Activated naive CD4-positive, alpha-beta T cell treated with anti-CD3 and anti-CD28 coated beads for 36 hours (primary cell): ENCODE measurements at regions of chr9 and their contacts with region 1.

Region 1: DNA sequence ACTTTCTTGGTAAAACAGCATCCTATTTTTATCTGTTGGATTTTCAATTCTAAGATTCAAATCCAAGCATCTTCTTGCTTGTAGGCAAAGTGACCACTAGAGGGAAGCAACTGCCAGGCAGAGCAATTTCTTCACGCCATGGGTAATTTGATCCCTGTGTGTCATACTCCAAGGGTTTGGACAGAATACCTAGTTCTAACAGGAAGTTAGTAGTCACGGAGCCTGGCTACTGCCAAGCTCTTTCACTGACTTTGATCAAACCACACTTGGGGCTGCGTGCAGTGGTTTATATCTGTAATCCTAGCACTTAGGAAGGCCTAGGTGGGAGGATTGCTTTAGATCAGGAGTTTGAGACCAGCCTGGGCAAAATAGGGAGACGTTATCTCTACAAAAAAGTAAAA is 473.6 kb upstream of the TNC start:
- DNase-seq: peak; percentile 16
- H3K4me3 Mint-ChIP-seq: no peak overlapping the region
- H3K27ac Mint-ChIP-seq: no peak overlapping the region
- H3K4me1 Mint-ChIP-seq: no peaks in the 10 kb centered on the region
- H3K27me3 Mint-ChIP-seq: peaks cover 10% of the 10 kb centered on the region

Region 2: DNA sequence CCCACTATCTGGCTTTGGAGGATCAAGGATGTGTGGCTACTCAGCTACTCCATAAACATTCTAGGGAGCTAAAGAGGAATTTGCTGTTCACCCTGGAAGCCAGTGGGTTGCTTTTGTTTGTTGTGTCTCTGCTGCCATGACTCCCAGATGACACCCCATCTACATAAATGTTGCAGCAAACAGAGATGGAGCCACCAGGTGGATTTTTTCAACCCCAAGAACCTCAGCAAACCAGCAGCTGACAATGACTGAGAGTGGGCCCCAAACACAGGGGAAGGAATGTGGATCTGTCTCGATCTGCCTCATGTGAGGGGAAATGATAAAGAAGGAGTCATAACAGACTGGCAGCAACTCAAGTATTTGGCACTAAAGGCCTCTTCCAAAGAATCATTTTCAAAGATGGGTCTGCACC is 341.0 kb before region 1 on chr9:
- CTCF ChIA-PET with region 1: no interaction called
- intact Hi-C with region 1: no loop called
- DNase-seq: no peak
- H3K4me3 Mint-ChIP-seq: no peak overlapping the region
- H3K27ac Mint-ChIP-seq: no peak overlapping the region
- H3K4me1 Mint-ChIP-seq: no peaks in the 10 kb centered on the region
- H3K27me3 Mint-ChIP-seq: peaks cover 3% of the 10 kb centered on the region

Region 3: DNA sequence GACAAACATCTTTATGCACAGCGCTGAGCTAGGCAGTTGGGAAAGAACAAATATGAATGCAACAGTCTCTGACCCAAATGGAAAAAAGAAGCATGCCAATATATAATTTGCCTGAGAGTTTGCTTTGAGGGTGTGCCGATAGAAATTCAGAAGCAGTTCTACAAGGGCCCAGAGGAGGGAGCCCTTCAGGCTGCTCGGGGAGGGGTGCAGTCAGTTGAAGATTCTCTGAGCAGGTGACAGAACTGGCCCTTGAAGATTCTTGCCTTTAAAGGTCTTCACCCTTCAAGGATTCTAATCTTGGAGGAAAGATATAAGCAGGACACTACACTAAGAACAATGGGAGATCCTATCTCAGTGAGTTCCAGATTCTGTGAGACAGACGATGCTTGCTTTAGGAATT is 558.3 kb after region 1 on chr9:
- CTCF ChIA-PET with region 1: no interaction called
- intact Hi-C with region 1: loop called (anchors 2 kb)
- DNase-seq: no peak
- H3K4me3 Mint-ChIP-seq: no peak overlapping the region
- H3K27ac Mint-ChIP-seq: no peak overlapping the region
- H3K4me1 Mint-ChIP-seq: peaks cover 5% of the 10 kb centered on the region
- H3K27me3 Mint-ChIP-seq: peaks cover 50% of the 10 kb centered on the region

Region 4: DNA sequence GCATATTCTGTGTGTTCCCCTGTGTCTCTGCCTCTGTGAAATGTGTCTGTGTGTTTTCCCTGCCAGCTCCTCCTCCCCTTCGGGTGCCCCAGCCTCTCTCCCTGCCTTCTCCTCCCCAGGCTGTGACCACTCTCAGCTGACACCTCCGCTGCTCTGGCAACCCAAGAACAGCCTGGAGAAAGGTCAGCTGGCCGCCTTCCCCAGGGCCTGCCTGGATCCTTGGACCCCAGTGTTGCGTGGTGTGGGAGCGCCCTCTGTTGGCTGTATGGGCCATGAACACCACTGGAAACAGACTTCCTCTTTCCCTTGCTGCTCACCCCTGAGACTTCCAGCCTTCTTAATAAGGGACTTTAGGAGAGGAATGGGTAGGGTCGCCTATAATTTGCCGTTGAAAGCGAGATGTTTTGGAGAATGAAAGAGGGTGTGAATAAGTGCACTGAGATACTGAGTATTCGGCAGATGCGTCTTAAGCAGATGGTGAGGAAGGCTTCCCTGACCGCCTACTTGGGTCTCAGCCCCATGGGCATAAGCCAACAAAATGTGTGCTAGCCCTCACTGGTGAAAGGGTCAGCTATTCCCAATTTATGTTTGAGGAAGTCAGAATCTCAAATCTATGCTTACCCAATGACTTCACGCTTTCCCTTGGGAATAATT is 980.6 kb after region 1 on chr9:
- CTCF ChIA-PET with region 1: interaction called, 5 read pairs
- intact Hi-C with region 1: loop called (anchors 2 kb)
- DNase-seq: peak; percentile 45
- H3K4me3 Mint-ChIP-seq: no peak overlapping the region
- H3K27ac Mint-ChIP-seq: no peak overlapping the region
- H3K4me1 Mint-ChIP-seq: no peaks in the 10 kb centered on the region
- H3K27me3 Mint-ChIP-seq: no peaks in the 10 kb centered on the region

Region 5: DNA sequence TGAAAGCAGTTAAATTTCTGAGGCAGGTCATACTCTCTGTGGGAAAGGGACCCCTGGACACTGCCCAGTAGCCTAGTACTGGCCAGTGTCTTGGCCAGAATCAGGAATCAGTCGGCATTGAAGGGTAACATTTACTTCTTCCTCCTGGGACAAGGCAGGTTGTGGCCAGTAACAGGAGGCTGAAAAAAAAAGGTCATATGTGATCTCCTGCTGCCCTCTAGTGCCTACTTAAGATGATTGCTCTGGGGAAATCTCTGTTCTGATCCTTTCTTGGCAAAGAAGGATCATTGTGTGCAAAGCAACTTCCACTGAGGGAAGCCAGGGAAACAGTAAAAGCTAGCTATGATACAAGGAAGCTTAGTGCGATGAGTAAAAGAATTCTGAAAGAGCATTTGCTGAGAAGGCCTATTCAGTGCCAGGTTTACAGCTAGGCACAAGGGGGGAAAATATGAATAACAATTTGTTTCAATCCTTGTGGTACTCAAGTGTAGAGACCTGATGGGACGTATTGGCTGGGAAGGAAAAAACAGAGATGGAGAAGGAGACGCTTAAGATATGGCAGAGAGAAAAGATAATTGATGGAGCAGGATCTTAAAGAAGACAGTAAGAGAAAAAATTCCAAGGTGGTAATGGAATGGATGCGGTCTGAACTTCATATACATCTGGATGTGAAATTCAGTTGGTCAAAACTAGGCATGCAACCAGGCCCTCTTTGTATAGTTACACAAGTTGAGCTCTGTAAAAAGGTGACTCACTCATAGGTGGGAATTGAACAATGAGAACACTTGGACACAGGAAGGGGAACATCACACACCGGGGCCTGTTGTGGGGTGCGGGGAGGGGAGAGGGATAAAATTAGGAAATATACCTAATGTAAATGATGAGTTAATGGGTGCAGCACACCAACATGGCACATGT is 1069.7 kb after region 1 on chr9:
- CTCF ChIA-PET with region 1: interaction called, 6 read pairs
- intact Hi-C with region 1: loop called (anchors 2 kb)
- DNase-seq: peak; percentile 8
- H3K4me3 Mint-ChIP-seq: no peak overlapping the region
- H3K27ac Mint-ChIP-seq: no peak overlapping the region
- H3K4me1 Mint-ChIP-seq: no peaks in the 10 kb centered on the region
- H3K27me3 Mint-ChIP-seq: no peaks in the 10 kb centered on the region